ENCODE measurements at regions of chrX and their contacts with region 1.

Region 1: GRCh38 chrX:24890677-24891076 is 125.1 kb downstream of the ARX start:
- DNase-seq: no peak
- ATAC-seq: no peak
- H3K4me3 ChIP-seq: no peak overlapping the region
- H3K4me3 Mint-ChIP-seq: no peak overlapping the region
- H3K27ac ChIP-seq: no peak overlapping the region
- H3K27ac Mint-ChIP-seq: no peak overlapping the region
- H3K4me1 ChIP-seq: no peaks in the 10 kb centered on the region
- H3K4me1 Mint-ChIP-seq: no peaks in the 10 kb centered on the region
- H3K27me3 ChIP-seq: no peaks in the 10 kb centered on the region
- H3K27me3 Mint-ChIP-seq: no peaks in the 10 kb centered on the region

Region 2: GRCh38 chrX:23742697-23743622 is 1147.7 kb before region 1 on chrX and contains the start of gene ACOT9:
- CTCF ChIA-PET with region 1: no interaction called
- POLR2A ChIA-PET with region 1: no interaction called
- DNase-seq: peak; percentile 31 to 76 (median 61)
- ATAC-seq: peak; percentile 88 to 92 (median 90)
- H3K4me3 ChIP-seq: peak within 1 kb of the TSS; percentile 70 to 73
- H3K4me3 Mint-ChIP-seq: peak within 1 kb of the TSS; percentile 66 to 88 (median 77)
- H3K27ac ChIP-seq: peak within 1 kb of the TSS; percentile 66
- H3K27ac Mint-ChIP-seq: peak within 1 kb of the TSS; percentile 71 to 79
- H3K4me1 ChIP-seq: peaks cover 0 to 31% of the 10 kb centered on the region in 2 experiments
- H3K4me1 Mint-ChIP-seq: peaks cover 13 to 37% (median 23%) of the 10 kb centered on the region in 3 donors
- H3K27me3 ChIP-seq: no peaks in the 10 kb centered on the region
- H3K27me3 Mint-ChIP-seq: no peaks in the 10 kb centered on the region
- total RNA-seq, gene ACOT9: 15.0 to 22.1 (median 19.2) TPM

Region 3: DNA sequence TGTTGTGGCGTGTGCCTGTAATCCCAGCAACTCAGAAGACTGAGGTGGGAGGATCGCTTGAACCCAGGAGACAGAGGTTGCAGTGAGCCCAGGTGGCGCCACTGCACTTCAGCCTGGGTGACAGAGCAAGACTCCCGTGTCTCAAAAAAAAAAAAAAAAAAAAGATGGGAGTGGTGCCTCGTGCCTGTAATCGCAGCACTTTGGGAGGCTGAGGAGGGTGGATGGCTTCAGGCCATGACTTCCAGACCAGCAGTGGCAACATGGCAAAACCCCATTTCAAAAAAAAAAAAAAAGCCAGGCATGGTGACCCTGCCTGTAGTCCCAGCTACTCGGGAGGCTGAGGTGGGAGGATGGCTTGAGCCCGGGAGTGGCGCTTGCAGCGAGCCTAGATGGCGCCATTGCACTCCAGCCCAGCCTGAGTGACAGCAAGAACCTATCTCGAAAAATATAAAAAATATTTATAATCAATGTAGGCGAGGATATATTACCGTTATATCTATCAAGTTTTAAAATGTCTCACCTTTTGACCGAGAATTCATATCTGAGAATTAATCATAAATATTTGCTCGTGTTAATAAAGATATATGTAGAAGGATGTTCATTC is 808.9 kb before region 1 on chrX:
- CTCF ChIA-PET with region 1: no interaction called
- POLR2A ChIA-PET with region 1: interaction called in 1 of 2 experiments, 11 read pairs
- DNase-seq: peak; percentile 9 to 66 (median 35)
- ATAC-seq: peak; percentile 61 to 85 (median 68)
- H3K4me3 ChIP-seq: no peak overlapping the region
- H3K4me3 Mint-ChIP-seq: peak overlapping the region in 1 of 3 donors; percentile 6
- H3K27ac ChIP-seq: no peak overlapping the region
- H3K27ac Mint-ChIP-seq: no peak overlapping the region
- H3K4me1 ChIP-seq: no peaks in the 10 kb centered on the region
- H3K4me1 Mint-ChIP-seq: peaks cover 6 to 10% (median 8%) of the 10 kb centered on the region in 3 donors
- H3K27me3 ChIP-seq: no peaks in the 10 kb centered on the region
- H3K27me3 Mint-ChIP-seq: no peaks in the 10 kb centered on the region

Region 4: DNA sequence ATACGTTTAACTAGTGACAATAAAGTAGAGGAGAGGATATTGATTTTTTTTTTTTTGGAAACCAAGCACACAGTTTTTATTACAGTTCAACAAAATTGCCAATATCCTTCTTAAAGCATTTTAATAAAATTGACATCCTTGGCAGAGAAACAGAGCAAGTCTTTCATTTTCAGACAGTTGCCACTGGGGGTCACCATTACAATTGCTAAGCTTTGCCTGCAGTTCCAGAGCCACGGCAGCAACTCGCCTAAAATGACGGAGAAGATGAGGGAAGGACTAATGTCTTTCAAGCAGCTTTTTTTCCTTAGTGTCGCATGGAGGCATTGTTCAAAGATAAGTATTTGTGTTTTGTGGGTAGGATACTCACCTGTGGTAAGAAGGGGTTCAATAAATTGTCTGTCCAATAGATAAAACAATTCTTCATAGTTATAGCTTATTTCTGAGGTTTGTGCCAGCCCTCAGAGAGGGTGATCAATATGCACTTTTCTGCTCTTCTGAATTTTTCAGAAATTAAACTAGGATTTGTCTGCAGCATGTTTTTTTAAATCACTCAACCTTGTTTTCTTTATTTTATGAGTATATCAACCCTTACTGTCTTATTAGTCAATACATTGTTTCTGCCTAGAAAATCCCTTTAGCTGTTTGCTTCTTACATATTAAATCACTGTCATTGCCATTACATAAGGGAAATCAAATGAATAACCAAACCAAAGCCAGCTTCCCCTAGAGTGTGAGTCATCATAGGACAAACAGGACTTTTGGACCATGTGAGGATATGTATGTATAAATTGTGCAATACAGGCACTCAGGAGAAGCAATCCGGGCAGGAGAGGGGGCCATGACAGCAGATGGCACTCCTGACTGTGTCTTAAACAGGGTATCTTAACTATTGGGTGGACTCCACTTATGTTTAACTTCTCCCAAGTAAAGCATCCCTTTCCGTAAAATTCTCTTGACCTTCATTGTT is 633.2 kb after region 1 on chrX:
- CTCF ChIA-PET with region 1: interaction called in 1 of 2 experiments, 14 read pairs
- POLR2A ChIA-PET with region 1: no interaction called
- DNase-seq: no peak
- ATAC-seq: no peak
- H3K4me3 ChIP-seq: no peak overlapping the region
- H3K4me3 Mint-ChIP-seq: no peak overlapping the region
- H3K27ac ChIP-seq: no peak overlapping the region
- H3K27ac Mint-ChIP-seq: no peak overlapping the region
- H3K4me1 ChIP-seq: no peaks in the 10 kb centered on the region
- H3K4me1 Mint-ChIP-seq: no peaks in the 10 kb centered on the region
- H3K27me3 ChIP-seq: no peaks in the 10 kb centered on the region
- H3K27me3 Mint-ChIP-seq: peaks cover 0 to 7% of the 10 kb centered on the region in 2 donors

Measured in T-cell (primary cell).